Left lung (tissue), 14 donors: ENCODE measurements at regions of chr1 and their contacts with region 1.

Region 1: DNA sequence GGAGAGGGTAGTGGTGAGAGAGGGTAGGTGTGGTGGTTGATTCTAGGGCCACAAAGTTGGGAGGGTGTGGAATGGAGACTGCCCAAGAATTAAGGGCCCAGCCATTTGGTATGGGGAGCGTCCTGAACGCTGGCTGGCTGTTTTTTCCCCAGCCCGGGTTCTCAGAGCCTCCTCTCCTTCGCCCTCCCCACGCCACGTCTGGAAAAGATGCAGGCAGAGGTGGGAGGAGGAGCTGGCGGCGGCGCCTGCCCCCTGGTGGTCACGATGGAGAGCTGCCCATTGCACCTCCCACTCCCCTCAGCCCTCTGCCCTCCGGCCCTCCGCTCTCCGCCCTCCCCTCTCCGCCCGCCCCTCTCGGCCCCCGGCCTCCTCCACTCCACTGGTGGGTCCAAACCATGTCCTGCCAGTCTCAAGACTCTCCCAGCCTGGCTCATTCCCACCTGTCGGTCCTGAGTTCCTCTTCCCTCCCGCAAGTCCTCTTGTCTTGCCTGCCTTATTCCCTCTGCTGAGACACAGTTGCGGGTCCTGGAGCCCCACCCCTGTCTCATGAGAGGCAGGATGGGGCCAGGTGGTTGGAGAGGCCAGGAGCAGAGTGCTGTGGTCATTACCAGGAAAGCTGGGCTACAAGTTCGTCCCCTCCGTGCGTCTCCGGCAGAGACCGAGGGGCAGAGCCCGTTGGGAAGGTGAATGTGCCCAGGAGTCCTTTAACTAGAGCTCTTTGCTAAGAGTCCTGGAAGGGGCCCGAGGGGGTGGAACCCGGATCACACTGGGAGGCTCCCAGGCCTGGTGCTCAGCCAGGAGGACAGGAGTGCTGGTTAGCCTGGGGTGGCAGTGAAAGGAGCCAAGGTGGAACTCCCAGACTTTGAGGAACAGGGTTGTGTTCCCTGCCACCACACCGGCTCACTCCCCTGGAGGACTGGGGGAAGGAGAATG is 22.6 kb downstream of the ETNK2 start:
- DNase-seq: peak; percentile 67 to 95 (median 78)
- ATAC-seq: peak; percentile 94
- H3K4me3 ChIP-seq: peak overlapping the region in 1 of 2 donors; percentile 3
- H3K27ac ChIP-seq: no peak overlapping the region
- H3K4me1 ChIP-seq: peaks cover 6 to 32% of the 10 kb centered on the region in 2 donors
- H3K27me3 ChIP-seq: no peaks in the 10 kb centered on the region
- CTCF ChIP-seq: peak; percentile 93 to 94

Region 2: GRCh38 chr1:203871107-203871875 is 257.9 kb before region 1 on chr1:
- intact Hi-C with region 1: loop called (anchors 5 to 10 kb)
- DNase-seq: peak in 2 of 4 donors; percentile 68 to 79
- ATAC-seq: peak; percentile 92
- H3K4me3 ChIP-seq: no peak overlapping the region
- H3K27ac ChIP-seq: peak overlapping the region in 1 of 2 donors; percentile 18
- H3K4me1 ChIP-seq: peaks cover 3 to 9% of the 10 kb centered on the region in 2 donors
- H3K27me3 ChIP-seq: no peaks in the 10 kb centered on the region
- CTCF ChIP-seq: peak; percentile 54 to 69

Region 3: GRCh38 chr1:204072931-204073836 is 56.0 kb before region 1 on chr1 and contains the start of gene SOX13:
- intact Hi-C with region 1: loop called in 1 of 2 experiments (anchors 10 kb)
- DNase-seq: peak; percentile 85 to 96 (median 90)
- ATAC-seq: peak; percentile 85
- H3K4me3 ChIP-seq: peak within 1 kb of the TSS; percentile 65 to 66
- H3K27ac ChIP-seq: peak within 1 kb of the TSS; percentile 78 to 86
- H3K4me1 ChIP-seq: peaks cover 22 to 41% of the 10 kb centered on the region in 2 donors
- H3K27me3 ChIP-seq: peaks cover 0 to 64% of the 10 kb centered on the region in 2 donors
- CTCF ChIP-seq: no peak
- polyA plus RNA-seq, gene SOX13: 45.4 to 62.8 (median 50.2) TPM